PC-9 (cell line): ENCODE measurements at regions of chr15 and their contacts with region 1.

Region 1: DNA sequence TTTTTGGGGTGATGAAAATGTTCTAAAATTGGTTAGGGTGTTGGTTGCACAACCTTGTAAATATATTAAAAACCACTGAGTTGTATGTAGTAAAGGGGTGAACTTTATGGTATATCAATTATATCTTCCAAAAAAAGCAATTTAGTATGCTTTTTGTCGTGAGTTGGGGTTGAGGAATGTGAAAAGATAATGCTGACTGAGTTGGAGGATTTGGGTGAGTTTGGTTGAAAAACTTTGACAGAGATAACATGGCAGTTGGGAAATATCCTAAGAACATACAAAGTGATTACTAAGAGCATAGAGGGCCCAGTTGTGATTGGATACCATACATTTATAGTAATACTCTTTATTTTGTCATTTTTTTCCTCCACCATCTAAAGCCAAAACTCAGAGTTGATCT is 33.6 kb downstream of the HMG20A start:
- DNase-seq: no peak
- H3K4me3 ChIP-seq: no peak overlapping the region
- H3K27ac ChIP-seq: no peak overlapping the region
- H3K4me1 ChIP-seq: peaks cover 10% of the 10 kb centered on the region
- H3K27me3 ChIP-seq: no peaks in the 10 kb centered on the region
- CTCF ChIP-seq: no peak

Region 2: DNA sequence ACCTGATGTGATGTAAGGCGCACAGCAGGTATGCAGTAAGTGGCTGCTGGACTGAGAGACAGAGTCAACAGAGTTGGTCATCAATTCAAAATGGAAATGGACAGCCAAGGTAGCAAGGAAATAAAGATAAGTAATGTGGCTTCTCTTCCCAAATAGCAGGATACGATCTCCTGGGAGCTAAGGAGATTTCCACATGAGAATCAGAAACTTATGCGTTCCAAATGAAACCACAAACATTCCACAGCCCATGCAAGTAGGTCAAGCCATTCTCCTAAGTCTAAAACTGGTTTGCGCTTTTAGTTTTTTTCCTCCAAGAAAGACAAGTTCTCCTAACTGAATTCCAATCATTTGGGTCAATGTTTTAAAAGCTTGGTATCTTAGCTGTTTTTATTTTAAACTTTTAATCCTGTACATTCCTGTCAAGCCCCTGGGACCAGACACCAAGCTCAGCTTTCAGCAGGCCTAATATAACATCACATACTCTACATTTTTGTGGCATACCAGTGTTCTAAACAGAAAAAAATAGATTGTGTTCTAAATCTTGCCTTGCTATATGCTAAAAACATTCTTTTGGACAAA is 309.7 kb before region 1 on chr15:
- CTCF ChIA-PET with region 1: no interaction called
- POLR2A ChIA-PET with region 1: interaction called, 10 read pairs
- intact Hi-C with region 1: no loop called
- DNase-seq: peak; percentile 33 to 70
- H3K4me3 ChIP-seq: no peak overlapping the region
- H3K27ac ChIP-seq: peak overlapping the region; percentile 61
- H3K4me1 ChIP-seq: peaks cover 16% of the 10 kb centered on the region; the same call in 1 of the 2 replicates
- H3K27me3 ChIP-seq: no peaks in the 10 kb centered on the region
- CTCF ChIP-seq: no peak